Transverse colon (tissue), 4 donors: ENCODE measurements at regions of chr1 and their contacts with region 1.

Region 1: DNA sequence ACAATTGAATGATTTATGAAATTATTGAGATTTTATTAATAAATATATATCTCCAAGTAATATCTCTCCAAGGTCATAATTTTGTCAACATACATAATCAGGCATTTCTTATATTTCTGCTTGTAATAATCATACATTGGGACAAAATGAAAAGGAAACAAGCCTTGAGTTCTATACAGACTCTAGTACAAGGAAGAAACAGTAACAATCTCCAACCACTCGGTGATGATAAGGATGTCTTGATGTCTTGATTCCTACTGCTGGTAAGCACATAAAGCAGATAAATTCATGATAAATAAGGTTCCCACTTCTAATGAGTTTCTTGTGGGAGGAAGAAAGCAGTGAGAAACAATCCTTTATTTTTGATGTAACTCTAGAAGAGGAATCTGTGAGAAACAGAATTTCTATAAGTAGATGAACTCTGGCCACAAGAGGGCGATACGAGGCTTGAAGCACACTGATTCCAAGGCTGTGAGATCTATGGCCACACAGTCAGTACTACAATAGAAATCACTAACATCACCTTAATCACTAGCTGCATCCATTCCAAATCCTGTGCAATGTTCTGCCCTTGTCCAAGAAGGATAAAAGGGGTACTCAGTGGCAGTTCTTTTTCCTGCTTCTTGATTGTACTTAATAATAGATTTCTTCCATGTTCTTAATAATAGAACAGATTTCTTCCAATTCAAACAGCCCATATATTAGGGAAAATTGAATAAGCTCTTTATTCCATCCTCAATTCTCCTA is 41.4 kb upstream of the LRRC8B start:
- DNase-seq: peak; percentile 79
- H3K4me3 ChIP-seq: no peak overlapping the region
- H3K27ac ChIP-seq: no peak overlapping the region
- H3K4me1 ChIP-seq: no peaks in the 10 kb centered on the region
- H3K27me3 ChIP-seq: no peaks in the 10 kb centered on the region
- CTCF ChIP-seq: peak; percentile 54 to 74 (median 72)
- EP300 ChIP-seq: no peak
- POLR2A ChIP-seq: no peak

Region 2: GRCh38 chr1:89552471-89553081 is 69.4 kb after region 1 on chr1:
- in situ Hi-C with region 1: no loop called
- intact Hi-C with region 1: no loop called
- DNase-seq: peak; percentile 18
- H3K4me3 ChIP-seq: peak overlapping the region in 2 of 4 donors; percentile 2 to 19
- H3K27ac ChIP-seq: peak overlapping the region; percentile 24 to 65 (median 53)
- H3K4me1 ChIP-seq: peaks cover 5 to 20% (median 8%) of the 10 kb centered on the region in 4 donors
- H3K27me3 ChIP-seq: no peaks in the 10 kb centered on the region
- CTCF ChIP-seq: no peak
- EP300 ChIP-seq: no peak
- POLR2A ChIP-seq: no peak

Region 3: GRCh38 chr1:89598450-89599331 is 115.5 kb after region 1 on chr1:
- in situ Hi-C with region 1: loop called in 2 of 4 experiments (anchors 10 kb)
- intact Hi-C with region 1: loop called (anchors 10 kb)
- DNase-seq: no peak
- H3K4me3 ChIP-seq: no peak overlapping the region
- H3K27ac ChIP-seq: no peak overlapping the region
- H3K4me1 ChIP-seq: no peaks in the 10 kb centered on the region
- H3K27me3 ChIP-seq: no peaks in the 10 kb centered on the region
- CTCF ChIP-seq: peak; percentile 63 to 69 (median 67)
- EP300 ChIP-seq: no peak
- POLR2A ChIP-seq: no peak